HEK293 (cell line): ENCODE measurements at regions of chr11 and their contacts with region 1.

Region 1: GRCh38 chr11:79400717-79401686 is 39.8 kb downstream of the TENM4 start:
- H3K4me3 ChIP-seq: no peak overlapping the region
- H3K27ac ChIP-seq: no peak overlapping the region
- H3K4me1 ChIP-seq: peaks cover 4% of the 10 kb centered on the region
- CTCF ChIP-seq: peak; percentile 49

Region 2: DNA sequence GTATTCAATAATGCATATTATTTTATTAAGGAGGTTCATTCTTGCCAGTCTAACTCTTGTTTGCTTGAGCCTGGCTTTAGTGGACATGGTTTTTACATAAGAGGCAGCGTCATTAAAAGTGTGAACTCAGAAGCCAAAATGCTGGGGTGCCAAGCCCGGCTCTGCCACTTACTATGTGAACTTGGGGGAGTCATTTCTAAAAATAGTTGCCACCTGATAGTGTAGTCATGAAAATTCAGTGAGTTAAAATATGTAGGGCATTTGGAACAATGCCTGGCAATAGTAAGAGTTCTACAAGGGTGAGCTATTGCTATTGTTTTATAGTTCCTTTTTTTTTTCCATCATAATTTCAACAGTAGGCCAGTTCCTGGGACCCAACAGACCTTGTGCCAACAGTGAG is 10.1 kb before region 1 on chr11:
- CTCF ChIA-PET with region 1: interaction called, 13 read pairs
- POLR2A ChIA-PET with region 1: no interaction called
- H3K4me3 ChIP-seq: no peak overlapping the region
- H3K27ac ChIP-seq: no peak overlapping the region
- H3K4me1 ChIP-seq: no peaks in the 10 kb centered on the region
- CTCF ChIP-seq: no peak

Region 3: GRCh38 chr11:79413268-79413667 is 12.3 kb after region 1 on chr11:
- CTCF ChIA-PET with region 1: interaction called, 34 read pairs
- POLR2A ChIA-PET with region 1: no interaction called
- H3K4me3 ChIP-seq: no peak overlapping the region
- H3K27ac ChIP-seq: no peak overlapping the region
- H3K4me1 ChIP-seq: no peaks in the 10 kb centered on the region
- CTCF ChIP-seq: no peak

Region 4: DNA sequence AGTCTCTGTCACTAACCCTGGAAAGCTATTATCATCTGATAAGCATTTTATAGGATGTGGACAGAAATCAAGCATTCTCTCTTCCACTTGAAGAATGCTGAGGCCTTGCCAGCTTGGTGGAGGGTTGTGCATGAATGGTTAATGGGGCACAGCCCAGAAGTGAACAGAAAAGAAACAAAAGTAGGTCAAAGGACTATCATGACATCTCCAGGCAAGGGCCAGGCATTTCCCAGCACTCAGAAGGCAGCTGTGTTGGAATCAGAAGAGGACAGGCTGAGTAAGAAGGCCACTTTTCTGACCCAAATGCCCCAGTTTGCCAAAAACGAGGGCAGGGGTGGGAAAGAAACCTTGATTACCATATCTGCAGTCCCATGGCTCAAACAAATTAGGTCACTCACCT is 27.4 kb after region 1 on chr11:
- CTCF ChIA-PET with region 1: interaction called, 10 read pairs
- POLR2A ChIA-PET with region 1: no interaction called
- H3K4me3 ChIP-seq: no peak overlapping the region
- H3K27ac ChIP-seq: no peak overlapping the region
- H3K4me1 ChIP-seq: no peaks in the 10 kb centered on the region
- CTCF ChIP-seq: no peak

Region 5: DNA sequence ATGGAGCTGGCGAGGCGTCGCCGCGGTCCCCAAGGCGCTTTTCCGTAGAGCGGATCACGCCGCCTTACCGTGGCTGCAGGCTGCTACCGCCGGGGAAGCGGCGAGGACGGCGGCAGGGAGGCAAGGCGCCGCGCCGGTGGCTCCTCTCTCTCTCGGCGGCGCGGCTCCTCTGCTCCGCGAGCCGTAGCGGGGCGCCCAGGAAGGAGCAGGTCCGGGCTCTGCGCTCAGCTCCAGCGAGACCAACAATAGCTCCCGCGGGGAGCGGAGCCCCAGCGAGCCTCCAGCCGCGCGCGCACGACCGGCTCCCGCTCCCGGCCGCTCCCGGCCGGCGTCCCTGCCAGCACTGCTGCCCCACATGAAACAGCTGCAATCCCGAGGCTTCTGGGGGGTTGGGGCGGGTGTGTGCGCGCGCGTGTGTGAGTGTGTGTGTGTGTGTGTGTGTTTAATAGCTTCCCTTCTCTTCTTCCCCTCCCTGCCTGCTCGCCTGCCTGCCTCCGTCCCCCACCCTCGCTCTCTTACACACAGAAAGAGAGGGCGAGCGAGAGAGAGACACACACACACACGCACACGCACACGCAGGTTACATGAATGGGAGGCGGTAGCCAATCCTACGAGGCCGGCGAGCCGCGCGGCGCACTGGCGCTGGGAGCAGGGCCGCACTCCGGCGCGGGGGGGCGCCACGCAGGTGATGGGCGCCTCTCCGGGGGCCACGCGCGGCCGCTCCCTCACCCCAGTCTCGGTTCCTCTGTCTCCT is 39.6 kb after region 1 on chr11 and contains the start of gene TENM4:
- CTCF ChIA-PET with region 1: interaction called, 10 read pairs
- POLR2A ChIA-PET with region 1: interaction called, 5 read pairs
- H3K4me3 ChIP-seq: peak within 1 kb of the TSS; percentile 66
- H3K27ac ChIP-seq: peak within 1 kb of the TSS; percentile 53; the same call in 1 of the 2 replicates
- H3K4me1 ChIP-seq: 0 out of 2 replicates have a peak, but pooled peaks cover 5% of the 10 kb centered on the region
- CTCF ChIP-seq: no peak

Region 6: GRCh38 chr11:79493555-79494171 is 92.7 kb after region 1 on chr11:
- CTCF ChIA-PET with region 1: interaction called, 79 read pairs
- POLR2A ChIA-PET with region 1: no interaction called
- H3K4me3 ChIP-seq: no peak overlapping the region
- H3K27ac ChIP-seq: no peak overlapping the region
- H3K4me1 ChIP-seq: no peaks in the 10 kb centered on the region
- CTCF ChIP-seq: peak; percentile 66